Sciatic nerve (tissue), 2 donors: ENCODE measurements at regions of chr4 and their contacts with region 1.

Region 1: DNA sequence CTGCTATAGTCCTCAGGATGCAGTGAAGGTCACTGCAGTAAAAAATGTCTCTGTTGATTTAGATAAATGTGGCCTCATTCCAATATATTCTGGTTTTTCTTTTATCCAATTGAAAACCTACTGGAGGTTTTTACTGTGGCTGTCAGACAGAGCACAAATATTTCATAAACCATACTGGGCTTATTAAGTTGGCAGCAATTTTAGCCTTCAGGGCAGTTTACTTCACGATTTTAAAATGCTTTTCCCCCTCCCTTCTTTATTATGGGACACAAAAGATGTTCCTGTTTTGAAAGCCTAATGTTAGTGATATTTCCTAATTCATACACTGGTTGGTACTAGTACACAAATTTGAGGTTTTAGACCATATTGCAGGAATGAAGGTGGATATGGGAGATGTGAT is 939.4 kb downstream of the C4orf33 start:
- DNase-seq: no peak
- ATAC-seq: no peak

Region 2: DNA sequence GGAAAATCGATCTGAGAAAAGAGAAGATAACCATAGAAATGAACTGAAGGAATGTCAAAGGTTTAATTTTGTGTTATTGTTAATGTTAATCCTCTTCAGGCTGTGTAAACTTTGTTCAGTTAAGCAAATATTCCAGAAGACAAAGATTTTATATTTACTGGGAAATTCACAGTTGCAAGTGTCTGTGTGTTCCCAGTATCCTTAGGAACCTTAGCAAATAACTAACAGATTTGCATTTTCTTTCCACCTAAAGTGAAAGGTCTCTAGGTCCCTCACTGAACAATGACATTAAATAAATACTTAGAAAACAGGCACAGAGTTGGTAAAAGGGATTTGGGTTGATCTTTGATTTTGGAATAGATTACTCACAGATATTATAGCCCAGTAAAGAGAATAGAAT is 614.8 kb before region 1 on chr4:
- intact Hi-C with region 1: loop called (anchors 5 kb)
- DNase-seq: no peak
- ATAC-seq: no peak